Caco-2 (cell line): ENCODE measurements at regions of chr12 and their contacts with region 1.

Region 1: DNA sequence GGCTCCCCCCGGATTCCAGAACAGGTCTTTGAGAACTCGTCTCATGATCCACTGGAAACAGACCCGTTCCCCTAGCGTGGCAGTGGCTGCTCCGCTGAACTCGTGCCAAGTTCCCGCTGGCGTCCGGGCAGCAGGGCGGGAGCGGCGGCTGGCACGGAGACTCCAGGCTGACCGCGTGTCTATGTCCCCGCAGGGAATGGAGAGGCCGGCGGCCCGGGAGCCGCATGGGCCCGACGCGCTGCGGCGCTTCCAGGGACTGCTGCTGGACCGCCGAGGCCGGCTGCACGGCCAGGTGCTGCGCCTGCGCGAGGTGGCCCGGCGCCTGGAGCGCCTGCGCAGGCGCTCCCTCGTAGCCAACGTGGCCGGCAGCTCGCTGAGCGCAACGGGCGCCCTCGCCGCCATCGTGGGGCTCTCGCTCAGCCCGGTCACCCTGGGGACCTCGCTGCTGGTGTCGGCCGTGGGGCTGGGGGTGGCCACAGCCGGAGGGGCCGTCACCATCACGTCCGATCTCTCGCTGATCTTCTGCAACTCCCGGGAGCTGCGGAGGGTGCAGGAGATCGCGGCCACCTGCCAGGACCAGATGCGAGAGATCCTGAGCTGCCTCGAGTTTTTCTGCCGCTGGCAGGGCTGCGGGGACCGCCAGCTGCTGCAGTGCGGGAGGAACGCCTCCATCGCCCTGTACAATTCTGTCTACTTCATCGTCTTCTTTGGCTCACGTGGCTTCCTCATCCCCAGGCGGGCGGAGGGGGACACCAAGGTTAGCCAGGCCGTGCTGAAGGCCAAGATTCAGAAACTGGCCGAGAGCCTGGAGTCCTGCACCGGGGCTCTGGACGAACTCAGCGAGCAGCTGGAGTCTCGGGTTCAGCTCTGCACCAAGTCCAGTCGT is 1.5 kb downstream of the APOLD1 start:
- DNase-seq: peak; percentile 89 to 94
- H3K4me3 ChIP-seq: peak overlapping the region; percentile 65
- H3K4me3 Mint-ChIP-seq: peak overlapping the region; percentile 88
- H3K27ac Mint-ChIP-seq: peak overlapping the region; percentile 95
- H3K4me1 ChIP-seq: peaks cover 48% of the 10 kb centered on the region
- H3K4me1 Mint-ChIP-seq: peaks cover 23% of the 10 kb centered on the region
- H3K27me3 ChIP-seq: no peaks in the 10 kb centered on the region
- H3K27me3 Mint-ChIP-seq: no peaks in the 10 kb centered on the region
- CTCF ChIP-seq: peak in 1 of 2 experiments; percentile 26

Region 2: GRCh38 chr12:12736759-12737676 is 49.9 kb before region 1 on chr12:
- CTCF ChIA-PET with region 1: interaction called, 13 read pairs
- POLR2A ChIA-PET with region 1: interaction called, 8 read pairs
- intact Hi-C with region 1: no loop called
- DNase-seq: peak in 1 of 2 experiments; percentile 47
- H3K4me3 ChIP-seq: no peak overlapping the region
- H3K4me3 Mint-ChIP-seq: no peak overlapping the region
- H3K27ac Mint-ChIP-seq: peak overlapping the region; percentile 10
- H3K4me1 ChIP-seq: no peaks in the 10 kb centered on the region; the same call in 1 of the 2 replicates
- H3K4me1 Mint-ChIP-seq: peaks cover 25% of the 10 kb centered on the region
- H3K27me3 ChIP-seq: no peaks in the 10 kb centered on the region
- H3K27me3 Mint-ChIP-seq: no peaks in the 10 kb centered on the region
- CTCF ChIP-seq: peak; percentile 66 to 68

Region 3: DNA sequence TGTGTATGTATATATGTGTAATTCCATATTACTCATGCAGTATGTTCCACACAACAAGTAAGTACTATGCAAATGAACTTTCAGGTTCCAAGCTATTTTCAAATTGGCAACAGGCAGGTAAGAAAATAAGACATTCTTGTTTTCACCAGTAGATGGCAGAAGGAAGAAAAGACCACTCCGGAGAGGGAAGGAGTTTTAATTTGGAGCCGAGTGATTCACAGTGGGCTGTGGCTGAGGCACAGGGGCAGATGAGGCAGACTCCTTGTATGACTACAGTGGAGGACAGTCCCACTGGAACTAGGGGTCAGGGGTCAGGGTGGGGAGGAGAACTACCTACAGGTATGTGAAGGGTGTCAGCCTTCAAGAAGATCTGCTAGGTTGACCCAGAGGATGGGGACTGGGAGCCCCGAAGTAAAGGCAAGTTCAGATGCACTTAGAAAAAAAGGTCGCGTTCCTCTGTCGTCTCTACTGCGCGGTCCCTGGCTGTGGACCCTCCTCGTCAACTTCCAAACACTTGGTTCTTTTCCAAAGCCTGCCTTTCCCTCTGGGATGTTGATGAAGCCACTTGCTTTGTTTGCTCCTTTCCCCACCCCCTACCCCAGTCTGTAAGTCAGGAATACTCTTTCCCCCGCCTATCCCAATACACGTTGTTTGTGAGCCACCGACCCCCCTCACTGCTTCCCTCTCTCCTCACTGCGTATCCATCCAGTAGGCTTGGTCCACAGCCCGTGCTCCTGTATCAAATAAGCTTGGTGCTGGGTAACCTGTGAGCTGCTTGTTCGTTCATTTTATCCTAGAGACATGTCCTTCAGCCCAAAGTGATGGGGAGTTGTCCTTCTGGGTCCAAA is 50.3 kb after region 1 on chr12:
- CTCF ChIA-PET with region 1: interaction called, 6 read pairs
- POLR2A ChIA-PET with region 1: interaction called, 6 read pairs
- intact Hi-C with region 1: loop called (anchors 1 kb)
- DNase-seq: peak; percentile 76 to 78
- H3K4me3 ChIP-seq: no peak overlapping the region
- H3K4me3 Mint-ChIP-seq: peak overlapping the region; percentile 0
- H3K27ac Mint-ChIP-seq: peak overlapping the region; percentile 46
- H3K4me1 ChIP-seq: peaks cover 45% of the 10 kb centered on the region
- H3K4me1 Mint-ChIP-seq: peaks cover 50% of the 10 kb centered on the region
- H3K27me3 ChIP-seq: no peaks in the 10 kb centered on the region
- H3K27me3 Mint-ChIP-seq: no peaks in the 10 kb centered on the region
- CTCF ChIP-seq: peak; percentile 73 to 85

Region 4: GRCh38 chr12:12890815-12891645 is 104.1 kb after region 1 on chr12 and contains the start of gene GPRC5A:
- CTCF ChIA-PET with region 1: interaction called, 7 read pairs
- POLR2A ChIA-PET with region 1: interaction called, 11 read pairs
- intact Hi-C with region 1: loop called (anchors 1 kb)
- DNase-seq: peak; percentile 93 to 95
- H3K4me3 ChIP-seq: peak within 1 kb of the TSS; percentile 56
- H3K4me3 Mint-ChIP-seq: peak within 1 kb of the TSS; percentile 83
- H3K27ac Mint-ChIP-seq: peak within 1 kb of the TSS; percentile 96
- H3K4me1 ChIP-seq: peaks cover 31% of the 10 kb centered on the region
- H3K4me1 Mint-ChIP-seq: peaks cover 53% of the 10 kb centered on the region
- H3K27me3 ChIP-seq: no peaks in the 10 kb centered on the region
- H3K27me3 Mint-ChIP-seq: no peaks in the 10 kb centered on the region
- CTCF ChIP-seq: peak in 1 of 2 experiments; percentile 36
- total RNA-seq, gene GPRC5A: 73.9 and 99.7 TPM in 2 replicates

Region 5: GRCh38 chr12:12983420-12984035 is 196.6 kb after region 1 on chr12:
- CTCF ChIA-PET with region 1: interaction called, 5 read pairs
- POLR2A ChIA-PET with region 1: interaction called, 6 read pairs
- intact Hi-C with region 1: loop called (anchors 1 kb)
- DNase-seq: peak in 1 of 2 experiments; percentile 70
- H3K4me3 ChIP-seq: no peak overlapping the region
- H3K4me3 Mint-ChIP-seq: no peak overlapping the region
- H3K27ac Mint-ChIP-seq: no peak overlapping the region
- H3K4me1 ChIP-seq: peaks cover 23% of the 10 kb centered on the region
- H3K4me1 Mint-ChIP-seq: no peaks in the 10 kb centered on the region
- H3K27me3 ChIP-seq: no peaks in the 10 kb centered on the region
- H3K27me3 Mint-ChIP-seq: no peaks in the 10 kb centered on the region
- CTCF ChIP-seq: peak; percentile 75 to 78

Region 6: DNA sequence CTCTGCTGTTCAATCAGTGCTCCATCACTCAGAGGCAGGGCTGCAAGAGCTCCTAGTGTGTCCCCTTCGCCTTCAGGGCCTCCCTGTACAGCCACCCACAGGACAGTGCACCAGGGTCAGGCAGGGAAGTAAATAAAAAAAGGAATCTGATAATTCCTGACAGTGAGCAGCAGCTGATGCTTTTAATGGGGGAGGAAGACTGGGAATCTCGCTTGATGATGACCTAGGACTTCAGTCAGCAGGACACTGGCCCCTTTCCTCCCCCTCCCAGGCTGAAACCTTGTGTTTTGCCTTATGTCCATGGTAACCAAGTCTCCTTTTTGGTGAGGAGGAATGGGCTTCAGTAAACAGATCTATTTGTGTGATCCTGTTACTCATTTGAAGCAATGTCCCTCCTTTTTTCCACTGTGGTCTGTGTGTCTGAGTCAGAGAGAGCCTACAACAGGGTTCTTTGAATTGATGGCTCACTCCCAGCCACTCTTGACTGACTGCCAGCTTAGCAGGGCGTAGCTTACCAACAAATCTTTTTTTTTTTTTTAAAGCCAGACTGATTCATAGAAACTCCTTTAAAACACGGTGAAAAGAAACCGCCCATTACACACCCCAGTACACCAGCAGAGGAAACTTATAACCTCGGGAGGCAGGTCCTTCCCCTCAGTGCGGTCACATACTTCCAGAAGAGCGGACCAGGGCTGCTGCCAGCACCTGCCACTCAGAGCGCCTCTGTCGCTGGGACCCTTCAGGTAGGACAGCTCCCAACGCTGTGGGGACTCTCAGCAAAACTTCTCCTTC is 409.4 kb after region 1 on chr12 and contains the start of gene EMP1:
- CTCF ChIA-PET with region 1: no interaction called
- POLR2A ChIA-PET with region 1: no interaction called
- intact Hi-C with region 1: no loop called
- DNase-seq: peak; percentile 67 to 83
- H3K4me3 ChIP-seq: no peak within 1 kb of the TSS
- H3K4me3 Mint-ChIP-seq: peak within 1 kb of the TSS; percentile 50
- H3K27ac Mint-ChIP-seq: peak within 1 kb of the TSS; percentile 28
- H3K4me1 ChIP-seq: peaks cover 47% of the 10 kb centered on the region
- H3K4me1 Mint-ChIP-seq: peaks cover 43% of the 10 kb centered on the region
- H3K27me3 ChIP-seq: no peaks in the 10 kb centered on the region
- H3K27me3 Mint-ChIP-seq: no peaks in the 10 kb centered on the region
- CTCF ChIP-seq: no peak
- total RNA-seq, gene EMP1: 6.6 and 10.2 TPM in 2 replicates